CD8-positive, alpha-beta memory T cell (primary cell): ENCODE measurements at regions of chr12 and their contacts with region 1.

Region 1: GRCh38 chr12:121626087-121626852 is at the start of gene ORAI1:
- DNase-seq: peak; percentile 95 to 98 (median 96)
- H3K4me3 ChIP-seq: peak within 1 kb of the TSS; percentile 95
- H3K4me3 Mint-ChIP-seq: peak within 1 kb of the TSS; percentile 95 to 100 (median 97)
- H3K27ac ChIP-seq: peak within 1 kb of the TSS; percentile 95
- H3K27ac Mint-ChIP-seq: peak within 1 kb of the TSS; percentile 98 to 99 (median 98)
- H3K4me1 ChIP-seq: peaks cover 47% of the 10 kb centered on the region
- H3K4me1 Mint-ChIP-seq: peaks cover 43 to 57% (median 43%) of the 10 kb centered on the region in 3 donors
- H3K27me3 ChIP-seq: no peaks in the 10 kb centered on the region
- H3K27me3 Mint-ChIP-seq: peaks cover 0 to 3% of the 10 kb centered on the region in 2 donors
- total RNA-seq, gene ORAI1: 61.9 to 64.7 TPM

Region 2: DNA sequence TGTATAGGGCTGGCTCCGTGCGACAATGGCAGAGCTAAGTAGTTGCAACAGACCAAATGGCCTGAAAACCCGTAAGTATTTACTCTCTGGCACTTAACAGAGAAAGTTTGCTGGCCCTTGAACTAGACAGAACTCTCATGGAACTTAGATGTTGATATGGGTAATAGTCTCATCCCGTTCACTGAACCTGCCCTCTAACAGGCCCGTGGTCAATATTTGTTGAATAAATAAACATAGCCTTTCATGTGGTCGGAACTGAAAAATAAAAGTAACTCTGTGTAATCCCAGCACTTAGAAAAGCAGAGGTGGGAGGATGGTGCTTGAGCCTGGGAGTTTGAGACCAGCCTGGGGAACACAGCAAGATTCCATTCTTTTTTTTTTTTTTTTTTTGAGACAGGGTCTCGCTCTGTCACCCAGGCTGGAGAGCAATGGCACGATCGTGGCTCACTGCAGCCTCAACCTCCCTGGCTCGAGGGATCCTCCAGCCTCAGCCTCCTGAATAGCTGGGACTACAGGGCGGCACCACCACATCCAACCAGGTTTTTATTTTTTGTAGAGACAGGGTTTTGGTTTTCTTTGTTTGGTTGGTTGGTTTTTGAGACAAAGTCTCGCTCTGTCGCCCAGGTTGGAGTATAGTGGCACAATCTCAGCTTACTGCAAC is 75.2 kb before region 1 on chr12:
- CTCF ChIA-PET with region 1: interaction called, 150 read pairs
- POLR2A ChIA-PET with region 1: interaction called, 7 read pairs
- DNase-seq: no peak
- H3K4me3 ChIP-seq: no peak overlapping the region
- H3K4me3 Mint-ChIP-seq: no peak overlapping the region
- H3K27ac ChIP-seq: no peak overlapping the region
- H3K27ac Mint-ChIP-seq: peak overlapping the region; percentile 10 to 98 (median 96)
- H3K4me1 ChIP-seq: peaks cover 13% of the 10 kb centered on the region
- H3K4me1 Mint-ChIP-seq: peaks cover 9 to 12% (median 12%) of the 10 kb centered on the region in 3 donors
- H3K27me3 ChIP-seq: no peaks in the 10 kb centered on the region
- H3K27me3 Mint-ChIP-seq: no peaks in the 10 kb centered on the region

Region 3: GRCh38 chr12:121590476-121591143 is 35.7 kb before region 1 on chr12:
- CTCF ChIA-PET with region 1: interaction called, 8 read pairs
- POLR2A ChIA-PET with region 1: interaction called, 28 read pairs
- DNase-seq: peak; percentile 47 to 87 (median 84)
- H3K4me3 ChIP-seq: peak overlapping the region; percentile 80
- H3K4me3 Mint-ChIP-seq: peak overlapping the region; percentile 88 to 95 (median 90)
- H3K27ac ChIP-seq: peak overlapping the region; percentile 98
- H3K27ac Mint-ChIP-seq: peak overlapping the region; percentile 99 to 100 (median 100)
- H3K4me1 ChIP-seq: peaks cover 33% of the 10 kb centered on the region
- H3K4me1 Mint-ChIP-seq: peaks cover 36 to 46% (median 43%) of the 10 kb centered on the region in 3 donors
- H3K27me3 ChIP-seq: no peaks in the 10 kb centered on the region
- H3K27me3 Mint-ChIP-seq: peaks cover 0 to 10% of the 10 kb centered on the region in 2 donors

Region 4: DNA sequence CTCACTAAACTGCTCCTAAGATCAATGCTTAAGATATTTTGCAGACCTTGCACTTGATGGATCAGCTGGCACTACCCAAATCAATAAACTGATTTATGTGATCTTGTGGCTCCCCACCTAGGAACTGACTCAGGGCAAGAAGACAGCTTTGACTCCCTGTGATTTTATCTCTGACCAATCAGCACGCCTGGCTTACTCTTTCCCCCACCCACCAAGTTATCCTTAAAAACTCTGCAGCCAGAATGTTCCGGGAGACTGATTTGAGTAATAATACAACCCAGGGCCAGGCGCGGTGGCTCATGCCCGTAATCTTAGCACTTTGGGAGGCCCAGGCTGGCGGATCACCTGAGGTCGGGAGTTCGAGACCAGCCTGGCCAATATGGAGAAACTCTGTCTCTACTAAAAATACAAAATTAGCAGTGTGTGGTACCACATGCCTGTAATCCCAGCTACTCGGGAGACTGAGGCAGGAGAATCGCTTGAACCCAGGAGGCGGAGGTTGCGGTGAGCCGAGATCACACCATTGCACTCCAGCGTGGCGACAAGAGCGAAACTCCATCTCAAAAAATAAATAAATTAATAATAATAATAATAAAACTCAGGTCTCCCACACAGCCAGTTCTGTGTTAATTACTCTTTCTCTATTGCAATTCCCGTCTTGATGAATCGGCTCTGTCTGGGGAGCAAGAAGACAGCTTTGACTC is 31.2 kb after region 1 on chr12:
- CTCF ChIA-PET with region 1: interaction called, 11 read pairs
- POLR2A ChIA-PET with region 1: interaction called, 35 read pairs
- DNase-seq: no peak
- H3K4me3 ChIP-seq: no peak overlapping the region
- H3K4me3 Mint-ChIP-seq: peak overlapping the region; percentile 14 to 77 (median 66)
- H3K27ac ChIP-seq: no peak overlapping the region
- H3K27ac Mint-ChIP-seq: peak overlapping the region; percentile 57 to 100 (median 96)
- H3K4me1 ChIP-seq: peaks cover 54% of the 10 kb centered on the region
- H3K4me1 Mint-ChIP-seq: peaks cover 53 to 79% (median 73%) of the 10 kb centered on the region in 3 donors
- H3K27me3 ChIP-seq: no peaks in the 10 kb centered on the region
- H3K27me3 Mint-ChIP-seq: peaks cover 0 to 9% of the 10 kb centered on the region in 2 donors